ENCODE measurements at regions of chr11 and their contacts with region 1.

Region 1: GRCh38 chr11:58629857-58630256 is 7.4 kb downstream of the CNTF start:
- H3K4me3 ChIP-seq: no peak overlapping the region
- H3K27ac ChIP-seq: no peak overlapping the region
- H3K4me1 ChIP-seq: no peaks in the 10 kb centered on the region
- CTCF ChIP-seq: no peak

Region 2: GRCh38 chr11:58567889-58568512 is 61.9 kb before region 1 on chr11:
- CTCF ChIA-PET with region 1: interaction called, 21 read pairs
- POLR2A ChIA-PET with region 1: no interaction called
- H3K4me3 ChIP-seq: no peak overlapping the region
- H3K27ac ChIP-seq: no peak overlapping the region
- H3K4me1 ChIP-seq: no peaks in the 10 kb centered on the region
- CTCF ChIP-seq: no peak

Region 3: DNA sequence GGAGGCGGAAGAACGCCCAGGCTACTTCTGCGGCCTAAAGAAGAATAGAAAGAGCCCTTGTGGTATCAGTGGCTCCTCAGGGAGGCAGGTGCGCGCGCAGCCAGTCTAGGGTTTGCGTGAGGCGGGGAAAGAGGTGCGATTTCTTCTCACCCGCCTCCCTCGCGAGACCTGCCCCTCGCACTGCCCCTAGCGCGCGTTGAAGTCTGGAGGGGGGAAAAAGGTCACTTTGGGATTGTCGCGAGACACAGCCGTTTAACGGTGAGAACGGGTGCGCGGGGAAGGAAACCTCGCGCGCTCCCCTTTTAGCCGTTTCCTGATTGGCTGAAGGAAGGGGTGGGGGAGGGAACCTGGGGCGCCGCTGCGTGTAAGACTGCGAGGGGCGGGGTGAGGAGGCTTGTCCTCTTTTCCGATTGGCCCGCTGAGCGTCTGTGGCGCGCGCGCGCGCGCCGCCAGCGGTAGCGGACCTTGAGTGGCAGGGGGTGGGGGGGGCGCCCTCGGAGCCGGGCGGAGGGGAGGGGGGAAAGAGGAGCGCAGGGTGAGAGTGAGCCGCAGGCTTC is 51.1 kb before region 1 on chr11 and contains the start of gene ZFP91:
- CTCF ChIA-PET with region 1: interaction called, 13 read pairs
- POLR2A ChIA-PET with region 1: no interaction called
- H3K4me3 ChIP-seq: peak within 1 kb of the TSS; percentile 99
- H3K27ac ChIP-seq: peak within 1 kb of the TSS; percentile 95
- H3K4me1 ChIP-seq: no peaks in the 10 kb centered on the region
- CTCF ChIP-seq: no peak

Region 4: DNA sequence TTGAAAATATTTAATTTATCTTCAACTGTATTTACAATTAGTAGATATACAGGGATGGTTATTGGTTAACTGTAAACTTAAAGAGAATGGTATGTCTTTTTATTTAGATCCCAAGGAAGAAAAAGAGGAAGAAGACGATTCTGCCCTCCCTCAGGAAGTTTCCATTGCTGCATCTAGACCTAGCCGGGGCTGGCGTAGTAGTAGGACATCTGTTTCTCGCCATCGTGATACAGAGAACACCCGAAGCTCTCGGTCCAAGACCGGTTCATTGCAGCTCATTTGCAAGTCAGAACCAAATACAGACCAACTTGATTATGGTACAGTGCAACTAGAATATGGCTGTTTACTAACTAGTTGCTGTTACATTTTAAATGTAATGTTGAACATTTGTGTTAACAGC is 20.1 kb before region 1 on chr11:
- CTCF ChIA-PET with region 1: interaction called, 12 read pairs
- POLR2A ChIA-PET with region 1: no interaction called
- H3K4me3 ChIP-seq: no peak overlapping the region
- H3K27ac ChIP-seq: no peak overlapping the region
- H3K4me1 ChIP-seq: peaks cover 6% of the 10 kb centered on the region
- CTCF ChIP-seq: no peak

Region 5: GRCh38 chr11:58617976-58618557 is 11.8 kb before region 1 on chr11:
- CTCF ChIA-PET with region 1: interaction called, 27 read pairs
- POLR2A ChIA-PET with region 1: no interaction called
- H3K4me3 ChIP-seq: no peak overlapping the region
- H3K27ac ChIP-seq: no peak overlapping the region
- H3K4me1 ChIP-seq: no peaks in the 10 kb centered on the region
- CTCF ChIP-seq: no peak

Region 6: GRCh38 chr11:58640386-58641023 is 10.6 kb after region 1 on chr11:
- CTCF ChIA-PET with region 1: interaction called, 41 read pairs
- POLR2A ChIA-PET with region 1: no interaction called
- H3K4me3 ChIP-seq: no peak overlapping the region
- H3K27ac ChIP-seq: no peak overlapping the region
- H3K4me1 ChIP-seq: no peaks in the 10 kb centered on the region
- CTCF ChIP-seq: no peak

Region 7: DNA sequence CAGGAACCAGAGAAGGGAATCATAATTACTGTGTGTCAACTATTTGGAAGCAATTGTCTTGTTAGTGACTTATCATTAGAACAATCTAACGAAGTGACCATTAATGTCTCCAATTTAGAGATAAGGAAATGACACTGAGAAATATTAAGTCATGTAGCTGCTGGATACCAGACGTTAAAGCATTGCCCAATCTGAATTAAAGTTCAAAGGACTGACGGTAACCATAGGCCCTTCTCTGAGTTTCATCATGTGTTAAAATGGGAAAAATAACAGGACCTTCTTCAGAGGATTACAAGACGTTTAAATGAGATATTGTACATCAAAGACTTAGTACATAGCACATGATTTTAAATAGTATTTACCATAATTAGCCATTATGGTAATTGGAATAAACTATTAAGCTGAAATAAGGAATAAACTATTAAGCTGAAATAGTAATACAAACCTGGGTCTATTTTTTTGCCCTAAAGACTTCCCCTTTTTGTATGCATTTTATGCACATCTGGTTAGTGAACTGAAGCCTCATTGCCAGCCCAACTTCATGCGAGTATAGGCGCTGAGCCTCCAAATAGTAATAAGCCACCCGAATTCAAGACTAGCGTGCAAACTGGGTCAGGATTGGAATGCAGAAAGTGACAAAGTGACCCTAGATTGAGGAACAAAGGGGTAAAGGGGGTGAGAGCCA is 350.4 kb after region 1 on chr11:
- CTCF ChIA-PET with region 1: no interaction called
- POLR2A ChIA-PET with region 1: no interaction called
- H3K4me3 ChIP-seq: no peak overlapping the region
- H3K27ac ChIP-seq: no peak overlapping the region
- H3K4me1 ChIP-seq: no peaks in the 10 kb centered on the region
- CTCF ChIP-seq: no peak